Activated CD8-positive, alpha-beta T cell treated with anti-CD3 and anti-CD28 coated beads, Interleukin-2, amount 10 ng/mL, durations not matched to agents 7 days and 5 days (primary cell): ENCODE measurements at regions of chr17 and their contacts with region 1.

Region 1: DNA sequence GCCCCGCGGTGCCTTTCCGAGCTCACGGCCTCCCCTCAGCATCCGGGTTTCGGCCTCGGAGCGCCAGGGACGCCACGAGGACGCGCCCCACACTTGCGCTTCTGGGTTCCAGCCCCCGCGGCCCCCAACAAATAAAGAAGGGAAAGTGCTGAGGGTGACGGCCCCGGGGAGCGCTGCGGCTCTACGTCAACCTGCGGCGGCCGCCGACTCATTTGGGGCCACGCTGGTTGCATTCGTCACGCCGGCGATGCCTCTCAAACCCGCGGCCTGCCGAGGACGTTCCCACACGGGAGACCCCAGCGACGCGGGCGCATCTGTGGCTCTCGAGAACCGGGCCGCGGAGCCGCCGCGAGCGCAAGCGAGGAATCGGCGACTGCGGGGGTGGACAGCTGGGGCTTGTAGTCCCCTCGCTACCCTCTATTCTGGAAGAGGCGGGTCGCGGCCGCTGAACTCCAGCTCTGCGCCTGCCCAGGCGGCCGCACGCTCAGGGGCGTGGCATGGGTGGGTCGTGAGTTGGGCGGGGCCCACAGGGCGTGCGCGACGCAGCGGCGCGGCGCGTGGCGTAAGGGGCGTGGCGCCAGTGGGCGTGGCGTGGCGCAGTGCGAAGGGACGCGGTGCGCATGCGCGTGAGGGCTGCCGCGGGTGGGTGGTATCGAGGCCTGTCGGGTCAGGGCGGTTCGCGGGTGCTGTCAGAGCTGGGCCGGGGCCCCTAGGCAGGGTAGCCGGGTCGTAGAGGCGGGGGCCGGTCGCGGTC is at the start of gene AMZ2:
- DNase-seq: peak; percentile 96
- ATAC-seq: peak; percentile 89
- H3K4me3 Mint-ChIP-seq: peak within 1 kb of the TSS; percentile 81
- H3K27ac Mint-ChIP-seq: peak within 1 kb of the TSS; percentile 97
- H3K4me1 Mint-ChIP-seq: peaks cover 37% of the 10 kb centered on the region
- H3K27me3 Mint-ChIP-seq: no peaks in the 10 kb centered on the region
- total RNA-seq, gene AMZ2: 79.9 to 80.0 TPM

Region 2: DNA sequence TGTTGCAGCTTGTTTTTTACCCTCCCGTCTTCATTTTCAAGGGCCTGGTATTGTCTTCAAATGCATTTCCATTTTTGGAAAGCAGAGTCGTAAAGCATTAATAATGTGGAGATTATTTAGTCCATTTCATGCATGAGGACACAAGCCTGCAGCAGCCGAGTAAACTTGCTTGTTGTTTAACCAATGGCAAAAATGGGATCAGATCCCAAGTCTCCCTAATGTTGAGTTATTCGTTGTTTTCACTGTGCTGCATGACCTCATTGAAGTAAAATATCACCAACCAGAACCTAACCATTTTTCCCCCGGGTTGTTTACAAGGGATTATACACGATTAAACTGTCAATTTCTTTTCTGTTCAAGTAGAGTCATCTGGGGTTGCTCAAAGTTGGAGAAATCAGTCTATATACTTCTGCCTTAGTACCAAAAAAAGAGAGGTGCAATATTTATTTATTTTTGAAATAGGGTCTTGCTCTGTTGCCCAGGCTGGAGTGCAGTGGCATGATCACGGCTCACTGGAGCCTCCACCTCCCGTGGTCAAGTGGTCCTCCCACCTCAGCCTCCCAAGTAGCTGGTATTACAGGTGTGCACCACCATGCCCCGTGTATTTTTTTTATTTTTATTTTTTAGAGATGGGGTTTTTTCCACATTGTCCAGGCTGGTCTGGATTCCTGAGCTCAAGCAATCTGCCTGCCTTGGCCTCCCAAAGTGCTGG is 12.6 kb after region 1 on chr17:
- CTCF ChIA-PET with region 1: interaction called, 4 read pairs
- POLR2A ChIA-PET with region 1: interaction called, 28 read pairs
- DNase-seq: no peak
- ATAC-seq: no peak
- H3K4me3 Mint-ChIP-seq: peak overlapping the region; percentile 8
- H3K27ac Mint-ChIP-seq: peak overlapping the region; percentile 89
- H3K4me1 Mint-ChIP-seq: peaks cover 75% of the 10 kb centered on the region
- H3K27me3 Mint-ChIP-seq: no peaks in the 10 kb centered on the region

Region 3: DNA sequence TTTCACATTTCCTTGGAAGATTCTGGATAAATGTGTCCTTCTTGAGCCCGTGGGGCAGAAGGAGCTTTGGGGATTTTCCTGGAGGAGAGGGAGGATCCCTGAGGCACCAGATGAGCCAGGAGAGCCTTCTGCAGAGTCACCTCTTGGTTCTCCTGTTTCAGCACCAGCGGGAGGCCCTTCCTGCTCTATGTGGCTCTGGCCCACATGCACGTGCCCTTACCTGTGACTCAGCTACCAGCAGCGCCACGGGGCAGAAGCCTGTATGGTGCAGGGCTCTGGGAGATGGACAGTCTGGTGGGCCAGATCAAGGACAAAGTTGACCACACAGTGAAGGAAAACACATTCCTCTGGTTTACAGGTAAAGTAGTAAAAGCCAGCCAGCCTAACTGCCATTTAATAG is 120.8 kb after region 1 on chr17:
- CTCF ChIA-PET with region 1: no interaction called
- POLR2A ChIA-PET with region 1: no interaction called
- DNase-seq: no peak
- ATAC-seq: no peak
- H3K4me3 Mint-ChIP-seq: no peak overlapping the region
- H3K27ac Mint-ChIP-seq: no peak overlapping the region
- H3K4me1 Mint-ChIP-seq: peaks cover 4% of the 10 kb centered on the region
- H3K27me3 Mint-ChIP-seq: no peaks in the 10 kb centered on the region